Activated T-helper 1 cell treated with anti-CD3 and anti-CD28 coated beads, Interleukin-12 subunit alpha, Interleukin-12 subunit beta, Interleukin-2, Interleukin-4 antibody, amounts not matched to agents 30 ng/mL and 10 ng/mL and 1 ng/mL, durations not matched to agents 14 hours and 24 hours and 36 hours (primary cell): ENCODE measurements at regions of chr12 and their contacts with region 1.

Region 1: GRCh38 chr12:50043854-50044253 is 13.5 kb upstream of the ASIC1 start:
- DNase-seq: no peak
- H3K4me3 Mint-ChIP-seq: no peak overlapping the region
- H3K27ac Mint-ChIP-seq: no peak overlapping the region
- H3K4me1 Mint-ChIP-seq: peaks cover 37% of the 10 kb centered on the region
- H3K27me3 Mint-ChIP-seq: peaks cover 11% of the 10 kb centered on the region

Region 2: DNA sequence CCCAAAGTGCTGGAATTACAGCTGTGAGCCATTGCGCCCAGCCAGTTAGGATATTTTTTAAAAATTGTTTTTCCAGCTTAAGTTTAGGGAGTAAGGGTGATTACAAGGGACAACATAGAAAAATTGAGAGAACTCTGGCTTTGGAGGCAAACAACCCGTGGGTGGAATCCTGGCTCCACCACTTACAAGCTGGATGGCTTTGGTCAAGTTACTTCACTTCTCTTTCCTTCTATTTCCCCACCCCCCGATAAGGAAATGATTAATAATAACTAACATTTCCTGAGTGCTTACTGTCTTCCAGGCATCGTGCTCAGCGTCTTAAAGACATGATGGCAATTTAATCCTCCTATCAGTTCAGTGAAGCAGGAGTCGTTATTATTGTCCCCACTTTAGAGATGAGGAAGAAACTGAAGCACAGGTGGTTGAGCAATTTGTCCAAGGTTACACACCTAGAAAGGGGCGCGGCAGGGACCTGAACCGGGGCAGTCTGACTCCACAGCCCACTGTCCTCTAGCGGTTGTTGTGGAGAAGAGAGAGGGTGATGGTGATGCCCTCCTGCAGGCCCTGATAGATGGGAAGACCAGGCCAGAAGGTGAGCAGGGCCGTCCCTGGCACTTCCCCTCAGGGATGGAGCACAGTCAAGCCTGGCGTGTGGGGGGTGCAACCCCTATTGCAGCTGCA is 123.5 kb before region 1 on chr12:
- intact Hi-C with region 1: no loop called
- DNase-seq: no peak
- H3K4me3 Mint-ChIP-seq: no peak overlapping the region
- H3K27ac Mint-ChIP-seq: no peak overlapping the region
- H3K4me1 Mint-ChIP-seq: no peaks in the 10 kb centered on the region
- H3K27me3 Mint-ChIP-seq: peaks cover 7% of the 10 kb centered on the region

Region 3: DNA sequence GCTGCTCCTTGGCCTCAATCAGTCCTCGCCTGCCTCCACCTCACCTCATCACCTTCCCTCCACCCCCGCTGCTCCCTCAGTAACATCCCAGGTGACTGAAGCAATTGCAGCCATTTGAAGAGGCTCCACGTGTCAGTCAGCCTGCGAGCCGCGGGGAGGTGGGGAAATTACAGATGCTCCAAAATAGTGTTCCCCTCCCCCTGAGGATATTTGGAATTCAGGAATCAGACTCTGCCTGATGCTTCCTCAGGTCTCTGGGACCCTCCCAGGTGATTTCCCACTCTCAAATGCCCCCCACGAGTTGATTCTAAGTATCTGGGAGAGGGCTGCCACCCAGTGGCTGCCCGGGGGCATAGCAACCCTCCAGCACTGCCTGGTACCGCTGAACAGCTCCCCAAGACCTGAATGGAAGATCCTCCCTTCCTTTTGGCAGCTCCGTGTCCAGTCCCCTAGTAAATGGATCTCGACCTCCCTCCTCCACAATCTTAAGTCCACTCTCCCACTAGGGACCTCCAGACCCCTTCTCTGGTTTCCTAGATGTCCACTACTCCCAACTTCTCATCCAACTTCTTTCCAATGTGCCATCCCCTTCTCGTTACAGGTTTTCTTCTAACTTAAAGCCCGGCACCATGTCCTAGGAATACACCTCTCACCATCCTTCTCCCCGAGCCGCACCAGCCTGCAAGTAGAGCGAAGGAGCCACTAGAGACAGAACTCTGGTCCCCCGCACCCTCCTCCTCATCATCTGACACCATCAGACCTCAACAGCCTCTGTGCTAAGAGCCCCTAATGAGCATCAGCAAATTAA is 12.2 kb after region 1 on chr12:
- intact Hi-C with region 1: loop called (anchors 1 kb)
- DNase-seq: peak; percentile 34
- H3K4me3 Mint-ChIP-seq: peak overlapping the region; percentile 45
- H3K27ac Mint-ChIP-seq: peak overlapping the region; percentile 52
- H3K4me1 Mint-ChIP-seq: peaks cover 39% of the 10 kb centered on the region
- H3K27me3 Mint-ChIP-seq: peaks cover 57% of the 10 kb centered on the region

Region 4: DNA sequence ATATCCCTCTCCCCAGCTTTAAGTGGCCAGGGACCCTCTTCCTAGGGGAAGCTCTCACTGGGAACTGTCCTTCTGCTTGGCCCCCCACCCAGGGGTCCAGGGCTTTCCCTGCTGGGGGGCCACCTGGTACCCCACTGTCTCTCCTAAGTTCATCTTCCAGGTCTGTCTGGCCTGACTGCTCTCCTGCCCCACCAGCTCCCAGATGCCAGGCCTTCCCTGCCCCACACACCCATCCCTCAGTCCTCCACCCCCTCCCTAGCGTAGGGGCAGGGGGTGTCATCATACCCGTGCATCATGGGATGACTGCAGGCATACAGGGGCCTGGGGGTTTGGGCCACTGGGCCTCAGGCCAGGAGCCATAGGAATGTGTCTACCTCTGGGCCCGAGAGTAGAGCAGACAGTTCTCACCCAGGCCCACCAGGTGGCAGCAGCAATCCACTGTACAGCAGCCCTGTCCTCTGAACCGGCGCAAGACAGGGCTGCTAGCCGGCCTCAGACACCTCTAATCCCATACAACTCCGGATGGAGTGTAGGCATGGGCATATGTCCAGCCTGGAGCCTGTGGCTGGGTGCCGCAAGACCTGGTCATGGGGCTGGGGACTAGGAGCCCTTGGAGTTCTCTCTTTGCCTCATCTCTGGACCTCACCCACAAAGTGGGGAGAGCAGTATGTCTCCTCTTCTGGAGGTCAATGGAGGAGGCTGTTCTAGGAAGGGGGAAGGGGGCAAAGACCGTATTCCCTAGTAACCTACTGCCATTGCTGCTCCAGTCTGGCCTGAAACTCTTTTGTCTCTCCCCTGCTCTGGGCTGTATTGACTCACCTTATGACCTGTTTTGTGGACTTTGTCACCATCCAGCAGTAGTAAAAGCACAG is 31.3 kb after region 1 on chr12:
- intact Hi-C with region 1: loop called (anchors 1 kb)
- DNase-seq: peak; percentile 69
- H3K4me3 Mint-ChIP-seq: no peak overlapping the region
- H3K27ac Mint-ChIP-seq: no peak overlapping the region
- H3K4me1 Mint-ChIP-seq: peaks cover 13% of the 10 kb centered on the region
- H3K27me3 Mint-ChIP-seq: peaks cover 8% of the 10 kb centered on the region

Region 5: DNA sequence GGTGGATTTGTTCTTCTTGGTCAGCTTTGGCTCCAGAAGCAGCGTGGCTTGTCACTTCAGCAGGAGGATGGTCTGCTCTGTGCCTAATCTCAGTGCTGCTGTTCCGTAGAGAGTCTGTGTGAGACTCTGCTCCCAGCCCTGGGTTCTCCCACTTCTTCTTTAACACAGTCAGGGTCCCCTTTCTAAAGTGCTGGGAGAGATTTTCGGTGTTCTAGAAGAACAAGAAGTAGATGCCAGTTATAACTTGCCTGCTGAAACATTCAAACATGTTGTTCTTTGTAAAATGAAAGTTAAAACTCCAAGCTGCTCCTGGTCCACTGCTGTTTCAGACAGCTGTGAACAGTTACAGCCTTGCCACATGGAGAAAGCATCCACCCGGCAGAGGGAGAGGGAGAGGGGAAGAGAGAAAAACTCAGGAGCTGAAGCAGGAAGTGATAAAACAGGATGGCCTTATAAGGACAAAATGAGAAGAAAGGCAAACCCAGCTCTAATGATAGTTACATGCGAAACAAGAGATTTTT is 178.5 kb after region 1 on chr12:
- intact Hi-C with region 1: no loop called
- DNase-seq: peak; percentile 11
- H3K4me3 Mint-ChIP-seq: no peak overlapping the region
- H3K27ac Mint-ChIP-seq: no peak overlapping the region
- H3K4me1 Mint-ChIP-seq: peaks cover 11% of the 10 kb centered on the region
- H3K27me3 Mint-ChIP-seq: no peaks in the 10 kb centered on the region